SK-N-SH (cell line): ENCODE measurements at regions of chr22 and their contacts with region 1.

Region 1: DNA sequence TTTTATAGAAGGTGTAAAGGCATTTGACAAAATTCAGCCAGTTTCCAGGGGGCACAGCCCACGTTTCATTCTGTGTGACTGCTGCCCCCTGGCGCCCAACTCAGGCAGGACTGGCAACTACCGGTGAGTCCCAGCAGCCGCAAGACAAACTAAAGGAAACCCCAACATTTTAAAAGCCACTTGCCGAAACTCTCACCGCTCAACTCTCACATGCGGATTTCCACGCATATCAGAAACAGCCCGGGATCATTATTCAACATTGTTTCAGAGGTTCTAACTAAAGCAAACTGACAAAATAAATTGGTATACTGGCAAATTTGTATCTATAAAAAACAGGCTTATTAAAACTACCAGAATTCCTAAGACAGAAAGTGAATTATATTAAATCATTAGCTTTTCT is 48.2 kb downstream of the MORC2 start:
- DNase-seq: peak; percentile 84
- H3K4me3 ChIP-seq: peak overlapping the region in 1 of 2 experiments; percentile 23; a peak in 1 of 4 replicates
- H3K27ac ChIP-seq: no peak overlapping the region
- H3K4me1 ChIP-seq: peaks cover 0 to 10% of the 10 kb centered on the region in 2 experiments; a peak in 1 of 4 replicates
- H3K27me3 ChIP-seq: no peaks in the 10 kb centered on the region
- CTCF ChIP-seq: peak; percentile 96
- EP300 ChIP-seq: no peak
- RAD21 ChIP-seq: peak; percentile 89

Region 2: DNA sequence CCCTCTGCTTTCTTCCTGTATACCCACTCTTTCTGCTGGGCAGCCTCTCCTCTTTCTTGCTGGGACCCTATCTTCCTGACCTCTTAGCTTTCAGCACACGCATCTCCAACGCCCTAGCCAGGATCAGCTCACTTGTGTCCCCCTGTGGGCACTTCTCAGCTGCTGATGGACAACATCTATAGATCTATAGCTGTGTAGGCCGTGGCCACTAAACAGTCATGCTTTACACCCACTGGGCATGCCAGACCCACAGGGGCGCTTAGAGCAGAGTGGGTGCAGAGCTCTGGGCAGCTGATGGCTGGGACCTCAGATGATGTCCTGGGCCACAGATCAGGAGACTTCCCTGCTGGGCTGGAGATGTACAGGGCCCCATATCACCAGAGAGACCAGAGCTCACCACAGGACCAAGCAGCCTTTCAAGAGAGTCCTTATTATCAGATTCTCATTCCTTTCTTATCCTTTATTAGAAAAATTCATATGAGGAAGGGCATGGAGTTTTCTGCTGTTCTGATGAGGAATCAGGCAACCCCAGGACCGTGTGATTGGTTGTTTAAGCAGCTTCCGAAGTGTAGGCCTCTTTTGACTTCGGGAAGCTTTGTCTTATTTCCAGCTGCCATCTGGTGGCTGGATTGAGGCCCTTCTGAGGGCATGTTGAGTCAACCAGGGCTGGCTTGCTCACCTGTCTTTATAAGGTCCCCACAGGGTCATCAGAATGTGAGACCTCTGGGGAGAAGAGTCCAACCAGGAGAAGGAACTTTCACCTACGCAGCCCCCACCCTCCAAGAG is 165.2 kb before region 1 on chr22:
- CTCF ChIA-PET with region 1: interaction called, 52 read pairs
- POLR2A ChIA-PET with region 1: no interaction called
- DNase-seq: peak; percentile 74
- H3K4me3 ChIP-seq: no peak overlapping the region
- H3K27ac ChIP-seq: no peak overlapping the region
- H3K4me1 ChIP-seq: no peaks in the 10 kb centered on the region; a peak in 2 of 4 replicates
- H3K27me3 ChIP-seq: no peaks in the 10 kb centered on the region
- CTCF ChIP-seq: peak; percentile 83
- EP300 ChIP-seq: no peak
- RAD21 ChIP-seq: peak; percentile 96

Region 3: GRCh38 chr22:30777587-30777986 is 142.8 kb before region 1 on chr22:
- CTCF ChIA-PET with region 1: interaction called, 170 read pairs
- POLR2A ChIA-PET with region 1: no interaction called
- DNase-seq: peak; percentile 31
- H3K4me3 ChIP-seq: no peak overlapping the region
- H3K27ac ChIP-seq: no peak overlapping the region
- H3K4me1 ChIP-seq: no peaks in the 10 kb centered on the region; a peak in 2 of 4 replicates
- H3K27me3 ChIP-seq: no peaks in the 10 kb centered on the region
- CTCF ChIP-seq: no peak
- EP300 ChIP-seq: no peak
- RAD21 ChIP-seq: no peak

Region 4: GRCh38 chr22:30890686-30891442 is 29.5 kb before region 1 on chr22:
- CTCF ChIA-PET with region 1: interaction called, 33 read pairs
- POLR2A ChIA-PET with region 1: no interaction called
- DNase-seq: peak; percentile 79
- H3K4me3 ChIP-seq: no peak overlapping the region; a peak in 1 of 4 replicates
- H3K27ac ChIP-seq: no peak overlapping the region
- H3K4me1 ChIP-seq: no peaks in the 10 kb centered on the region
- H3K27me3 ChIP-seq: no peaks in the 10 kb centered on the region
- CTCF ChIP-seq: peak; percentile 73
- EP300 ChIP-seq: no peak
- RAD21 ChIP-seq: peak; percentile 64

Region 5: DNA sequence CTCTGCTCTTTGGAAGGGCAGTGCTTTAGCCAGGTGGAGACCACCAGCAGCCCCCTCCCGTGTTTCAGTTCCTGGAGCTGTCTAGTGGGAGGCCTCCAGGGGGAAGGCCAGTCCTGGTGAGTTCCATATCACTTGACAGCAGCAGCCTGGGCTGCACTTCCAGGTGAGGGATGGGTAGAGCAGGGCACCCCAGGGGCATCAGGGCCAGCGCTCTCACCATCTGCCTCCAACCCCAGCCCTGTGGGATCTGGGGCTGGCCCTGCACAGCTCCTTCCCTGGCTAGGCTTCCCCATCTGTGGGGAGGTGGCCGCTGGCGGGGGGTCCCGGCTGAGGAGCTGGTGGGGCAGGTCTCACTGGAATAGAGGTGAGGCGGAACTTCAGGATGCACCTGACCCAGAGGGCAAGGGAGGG is 12.4 kb before region 1 on chr22:
- CTCF ChIA-PET with region 1: interaction called, 46 read pairs
- POLR2A ChIA-PET with region 1: no interaction called
- DNase-seq: no peak
- H3K4me3 ChIP-seq: no peak overlapping the region
- H3K27ac ChIP-seq: no peak overlapping the region
- H3K4me1 ChIP-seq: no peaks in the 10 kb centered on the region
- H3K27me3 ChIP-seq: no peaks in the 10 kb centered on the region
- CTCF ChIP-seq: no peak
- EP300 ChIP-seq: no peak
- RAD21 ChIP-seq: no peak